Ascending aorta (tissue), 2 donors: ENCODE measurements at regions of chr11 and their contacts with region 1.

Region 1: GRCh38 chr11:66638177-66639065 is at the start of gene RBM4:
- DNase-seq: peak; percentile 96 to 99
- H3K4me3 ChIP-seq: peak within 1 kb of the TSS; percentile 72 to 96
- H3K27ac ChIP-seq: peak within 1 kb of the TSS; percentile 86 to 88
- H3K4me1 ChIP-seq: peaks cover 28 to 36% of the 10 kb centered on the region in 2 donors
- H3K27me3 ChIP-seq: no peaks in the 10 kb centered on the region
- CTCF ChIP-seq: no peak
- total RNA-seq, gene RBM4: 79.5 TPM

Region 2: GRCh38 chr11:66592457-66593302 is 45.7 kb before region 1 on chr11 and contains the starts of genes CCDC87 and CCS:
- intact Hi-C with region 1: loop called (anchors 1 kb)
- DNase-seq: peak; percentile 90 to 99
- H3K4me3 ChIP-seq: peak within 1 kb of the TSS; percentile 70 to 82
- H3K27ac ChIP-seq: peak within 1 kb of the TSS; percentile 66 to 69
- H3K4me1 ChIP-seq: peaks cover 5 to 22% of the 10 kb centered on the region in 2 donors
- H3K27me3 ChIP-seq: no peaks in the 10 kb centered on the region
- CTCF ChIP-seq: peak; percentile 74 to 93 (median 76)
- total RNA-seq, gene CCDC87: 0.21 TPM
- total RNA-seq, gene CCS: 50.4 TPM

Region 3: DNA sequence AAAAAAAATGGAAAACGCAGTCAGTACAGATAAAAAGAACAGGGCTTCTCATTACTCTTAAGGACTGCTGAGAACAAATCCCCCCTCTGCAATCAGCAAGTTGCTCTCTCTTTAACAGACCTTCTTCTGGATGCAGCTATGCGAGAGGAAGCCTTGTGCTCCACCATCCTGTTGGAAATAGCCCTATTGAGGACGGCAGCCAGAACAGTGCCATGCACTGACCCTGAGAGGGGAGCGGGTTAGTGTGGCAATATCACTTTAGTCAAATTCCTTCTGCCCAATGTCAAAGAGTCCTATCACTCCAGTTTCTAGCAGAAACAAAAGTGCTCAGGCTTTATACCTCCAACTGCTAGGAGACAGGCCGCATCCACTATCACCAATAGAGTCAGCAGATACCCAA is 32.4 kb after region 1 on chr11:
- intact Hi-C with region 1: no loop called
- DNase-seq: no peak
- H3K4me3 ChIP-seq: no peak overlapping the region
- H3K27ac ChIP-seq: no peak overlapping the region
- H3K4me1 ChIP-seq: peaks cover 0 to 12% of the 10 kb centered on the region in 2 donors
- H3K27me3 ChIP-seq: no peaks in the 10 kb centered on the region
- CTCF ChIP-seq: no peak